ENCODE measurements at regions of chr7 and their contacts with region 1.

Region 1: DNA sequence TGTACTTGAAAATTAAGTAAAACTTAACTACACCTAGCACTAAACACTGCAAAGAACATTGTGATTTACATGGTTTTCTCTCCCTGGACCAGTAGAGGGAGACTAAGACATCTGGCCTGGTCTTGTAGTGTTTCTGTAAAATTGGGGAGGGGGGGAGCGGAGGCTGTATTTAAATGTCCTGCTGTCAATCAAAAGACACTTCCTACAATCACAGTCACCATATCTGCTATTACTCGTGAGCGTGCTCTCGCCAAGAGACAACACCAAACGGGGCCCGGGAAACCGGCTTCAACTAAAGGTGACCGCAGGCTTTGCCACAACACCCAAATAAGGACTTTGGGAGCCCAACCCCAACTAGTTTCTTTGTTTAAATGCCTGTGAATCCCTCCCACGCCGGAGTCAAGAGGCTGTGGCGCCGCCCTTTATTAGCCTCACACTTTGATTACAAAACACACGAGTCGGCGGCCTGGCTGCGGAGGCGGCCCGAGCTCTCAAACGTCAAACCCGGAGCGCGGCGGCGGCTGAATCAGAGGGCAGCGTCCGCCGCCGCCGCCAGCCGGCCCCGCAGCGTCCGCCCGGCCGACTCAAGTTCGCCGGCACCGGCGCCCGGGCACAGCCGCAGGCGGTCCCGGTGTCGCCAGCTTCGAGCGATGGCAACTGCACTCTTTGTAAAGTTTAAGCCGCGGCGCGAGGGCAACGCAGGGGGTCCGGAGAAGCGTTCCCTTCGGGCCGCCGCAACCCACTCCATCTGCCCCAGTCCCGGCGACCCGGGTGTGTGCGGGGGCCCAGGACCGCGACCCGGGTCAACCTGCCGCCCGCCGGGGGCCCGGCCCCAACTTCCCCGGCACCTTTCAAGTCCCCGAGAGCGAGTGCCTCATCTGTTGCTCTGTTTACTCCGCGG is 1.3 kb downstream of the KDM7A start:
- DNase-seq: peak; percentile 76 to 98 (median 90)
- ATAC-seq: peak; percentile 66
- H3K4me3 ChIP-seq: peak overlapping the region; percentile 54 to 69
- H3K4me3 Mint-ChIP-seq: peak overlapping the region; percentile 87
- H3K27ac ChIP-seq: peak overlapping the region; percentile 80 to 93
- H3K27ac Mint-ChIP-seq: peak overlapping the region; percentile 96
- H3K4me1 ChIP-seq: peaks cover 33% of the 10 kb centered on the region
- H3K4me1 Mint-ChIP-seq: peaks cover 42% of the 10 kb centered on the region
- H3K27me3 ChIP-seq: no peaks in the 10 kb centered on the region
- H3K27me3 Mint-ChIP-seq: no peaks in the 10 kb centered on the region
- CTCF ChIP-seq: peak; percentile 82

Region 2: GRCh38 chr7:139340037-139340807 is 835.2 kb before region 1 on chr7:
- CTCF ChIA-PET with region 1: no interaction called
- POLR2A ChIA-PET with region 1: no interaction called
- intact Hi-C with region 1: loop called in 1 of 2 experiments (anchors 5 kb)
- DNase-seq: peak; percentile 95 to 100 (median 97)
- ATAC-seq: peak; percentile 80
- H3K4me3 ChIP-seq: peak overlapping the region; percentile 69 to 85
- H3K4me3 Mint-ChIP-seq: peak overlapping the region; percentile 98
- H3K27ac ChIP-seq: peak overlapping the region; percentile 94 to 98
- H3K27ac Mint-ChIP-seq: peak overlapping the region; percentile 100
- H3K4me1 ChIP-seq: peaks cover 13% of the 10 kb centered on the region
- H3K4me1 Mint-ChIP-seq: peaks cover 32% of the 10 kb centered on the region
- H3K27me3 ChIP-seq: no peaks in the 10 kb centered on the region
- H3K27me3 Mint-ChIP-seq: peaks cover 2% of the 10 kb centered on the region
- CTCF ChIP-seq: peak; percentile 36

Region 3: DNA sequence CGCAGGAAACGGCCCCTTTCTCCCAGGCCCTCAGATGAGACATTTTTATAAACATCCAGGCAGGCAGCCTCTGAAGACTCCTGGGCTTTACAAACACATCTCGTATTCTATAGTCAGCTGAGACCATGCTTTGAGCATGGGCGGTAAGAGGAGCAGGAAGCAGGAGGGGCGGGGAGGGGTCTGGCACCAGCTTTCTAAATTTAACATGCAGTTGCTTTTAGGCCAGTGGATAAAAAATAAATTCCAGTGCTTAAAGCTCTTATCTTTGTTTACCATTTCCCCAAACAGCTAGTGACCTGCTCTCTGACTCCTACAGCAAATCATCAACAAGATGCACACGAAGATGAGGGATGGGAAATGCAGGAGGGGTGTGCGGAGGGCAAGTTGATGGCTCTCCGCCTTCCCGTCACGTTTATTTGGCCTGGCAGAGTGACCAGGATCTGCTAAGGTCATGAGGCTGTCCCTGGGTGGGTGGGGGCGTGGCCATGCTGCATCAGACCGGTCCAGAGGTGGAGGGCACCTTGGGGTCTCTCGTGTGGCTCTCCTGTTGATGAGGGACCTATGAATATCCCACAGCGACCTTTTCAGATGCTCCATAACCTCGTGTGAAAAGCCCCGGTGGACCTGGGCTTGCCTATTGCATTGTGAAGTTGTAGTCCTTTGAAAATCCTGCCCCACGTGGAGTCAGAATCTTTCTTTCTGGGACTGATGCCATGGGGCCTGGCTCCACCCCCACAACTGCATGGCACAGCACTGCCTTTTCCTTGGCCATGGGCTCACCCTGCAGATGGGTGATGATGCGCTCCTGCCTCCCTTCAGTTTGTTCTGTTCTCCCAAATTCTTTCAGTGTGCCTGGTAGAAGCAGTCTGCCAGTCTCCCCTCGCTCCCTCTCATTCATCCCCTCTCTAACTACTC is 180.2 kb before region 1 on chr7:
- CTCF ChIA-PET with region 1: no interaction called
- POLR2A ChIA-PET with region 1: no interaction called
- intact Hi-C with region 1: no loop called
- DNase-seq: no peak
- ATAC-seq: no peak
- H3K4me3 ChIP-seq: no peak overlapping the region
- H3K4me3 Mint-ChIP-seq: no peak overlapping the region
- H3K27ac ChIP-seq: no peak overlapping the region
- H3K27ac Mint-ChIP-seq: no peak overlapping the region
- H3K4me1 ChIP-seq: no peaks in the 10 kb centered on the region
- H3K4me1 Mint-ChIP-seq: no peaks in the 10 kb centered on the region
- H3K27me3 ChIP-seq: no peaks in the 10 kb centered on the region
- H3K27me3 Mint-ChIP-seq: no peaks in the 10 kb centered on the region
- CTCF ChIP-seq: no peak

Region 4: DNA sequence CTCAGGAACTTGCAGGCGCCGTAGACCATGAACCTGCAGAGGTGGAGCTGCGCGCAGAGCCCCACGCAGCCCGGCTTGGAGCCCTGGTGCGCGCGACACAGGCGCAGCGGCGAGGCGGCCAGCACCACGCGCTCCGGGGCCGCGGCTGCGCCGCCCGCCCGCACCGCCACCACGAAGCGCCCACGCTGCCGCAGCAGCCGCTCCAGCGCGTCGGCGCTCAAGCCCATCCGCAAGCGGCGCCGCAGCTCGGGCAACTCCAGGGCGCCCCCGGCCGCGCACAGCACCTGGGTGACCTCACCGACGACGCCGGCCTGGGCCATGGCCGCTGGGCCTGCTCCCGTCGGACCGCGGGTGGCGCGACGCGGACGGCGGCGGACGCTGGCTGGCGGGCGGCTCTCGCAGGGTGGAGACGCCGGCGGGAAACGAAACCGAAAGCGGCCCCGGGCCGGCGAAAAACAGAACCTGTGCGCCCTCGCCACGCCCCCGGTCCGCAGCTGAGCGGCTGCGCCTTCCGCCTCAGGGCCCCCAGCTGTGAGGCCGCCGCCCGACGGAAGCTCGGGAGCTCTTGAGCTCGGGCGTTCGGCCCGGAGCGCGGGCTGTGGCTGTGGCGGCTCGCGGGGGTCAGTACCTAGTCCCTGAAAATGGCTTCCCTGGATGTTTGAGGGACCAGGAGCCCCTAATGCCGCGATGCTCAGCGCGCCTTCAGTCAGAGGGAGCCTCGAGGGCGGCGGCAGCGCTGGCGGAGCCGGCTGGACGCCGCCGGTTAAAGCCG is 112.8 kb before region 1 on chr7 and contains the start of gene PARP12:
- CTCF ChIA-PET with region 1: no interaction called
- POLR2A ChIA-PET with region 1: interaction called, 5 read pairs
- intact Hi-C with region 1: loop called (anchors 1 to 5 kb)
- DNase-seq: peak; percentile 78 to 94 (median 87)
- ATAC-seq: peak; percentile 76
- H3K4me3 ChIP-seq: peak within 1 kb of the TSS; percentile 68 to 86
- H3K4me3 Mint-ChIP-seq: peak within 1 kb of the TSS; percentile 95
- H3K27ac ChIP-seq: peak within 1 kb of the TSS; percentile 82
- H3K27ac Mint-ChIP-seq: peak within 1 kb of the TSS; percentile 94
- H3K4me1 ChIP-seq: peaks cover 34% of the 10 kb centered on the region
- H3K4me1 Mint-ChIP-seq: peaks cover 42% of the 10 kb centered on the region
- H3K27me3 ChIP-seq: no peaks in the 10 kb centered on the region
- H3K27me3 Mint-ChIP-seq: no peaks in the 10 kb centered on the region
- CTCF ChIP-seq: no peak
- total RNA-seq, gene PARP12: 70.3 to 85.5 TPM

Region 5: GRCh38 chr7:140260352-140261104 is 85.1 kb after region 1 on chr7:
- CTCF ChIA-PET with region 1: interaction called, 15 read pairs
- POLR2A ChIA-PET with region 1: interaction called, 39 read pairs
- intact Hi-C with region 1: no loop called
- DNase-seq: no peak
- ATAC-seq: no peak
- H3K4me3 ChIP-seq: no peak overlapping the region
- H3K4me3 Mint-ChIP-seq: no peak overlapping the region
- H3K27ac ChIP-seq: no peak overlapping the region
- H3K27ac Mint-ChIP-seq: peak overlapping the region; percentile 32
- H3K4me1 ChIP-seq: peaks cover 47% of the 10 kb centered on the region
- H3K4me1 Mint-ChIP-seq: peaks cover 51% of the 10 kb centered on the region
- H3K27me3 ChIP-seq: no peaks in the 10 kb centered on the region
- H3K27me3 Mint-ChIP-seq: no peaks in the 10 kb centered on the region
- CTCF ChIP-seq: no peak

Region 6: GRCh38 chr7:140397784-140398750 is 222.6 kb after region 1 on chr7 and contains the start of gene SLC37A3:
- CTCF ChIA-PET with region 1: no interaction called
- POLR2A ChIA-PET with region 1: no interaction called
- intact Hi-C with region 1: loop called (anchors 2 to 5 kb)
- DNase-seq: peak; percentile 70 to 91 (median 87)
- ATAC-seq: peak; percentile 96
- H3K4me3 ChIP-seq: peak within 1 kb of the TSS; percentile 77 to 84
- H3K4me3 Mint-ChIP-seq: peak within 1 kb of the TSS; percentile 90
- H3K27ac ChIP-seq: peak within 1 kb of the TSS; percentile 48 to 59
- H3K27ac Mint-ChIP-seq: peak within 1 kb of the TSS; percentile 81
- H3K4me1 ChIP-seq: peaks cover 14% of the 10 kb centered on the region
- H3K4me1 Mint-ChIP-seq: peaks cover 28% of the 10 kb centered on the region
- H3K27me3 ChIP-seq: no peaks in the 10 kb centered on the region
- H3K27me3 Mint-ChIP-seq: no peaks in the 10 kb centered on the region
- CTCF ChIP-seq: peak; percentile 25
- total RNA-seq, gene SLC37A3: 28.4 to 32.1 TPM

Region 7: GRCh38 chr7:140924019-140924820 is 748.7 kb after region 1 on chr7:
- CTCF ChIA-PET with region 1: no interaction called
- POLR2A ChIA-PET with region 1: no interaction called
- intact Hi-C with region 1: loop called in 1 of 2 experiments (anchors 10 kb)
- DNase-seq: peak; percentile 55 to 95 (median 75)
- ATAC-seq: peak; percentile 65
- H3K4me3 ChIP-seq: peak overlapping the region; percentile 93
- H3K4me3 Mint-ChIP-seq: no peak overlapping the region
- H3K27ac ChIP-seq: peak overlapping the region; percentile 96 to 97
- H3K27ac Mint-ChIP-seq: no peak overlapping the region
- H3K4me1 ChIP-seq: peaks cover 13% of the 10 kb centered on the region
- H3K4me1 Mint-ChIP-seq: peaks cover 15% of the 10 kb centered on the region
- H3K27me3 ChIP-seq: no peaks in the 10 kb centered on the region
- H3K27me3 Mint-ChIP-seq: no peaks in the 10 kb centered on the region
- CTCF ChIP-seq: no peak

Measured in CD8-positive, alpha-beta T cell (primary cell).